Spleen (tissue), 13 donors: ENCODE measurements at regions of chr4 and their contacts with region 1.

Region 1: DNA sequence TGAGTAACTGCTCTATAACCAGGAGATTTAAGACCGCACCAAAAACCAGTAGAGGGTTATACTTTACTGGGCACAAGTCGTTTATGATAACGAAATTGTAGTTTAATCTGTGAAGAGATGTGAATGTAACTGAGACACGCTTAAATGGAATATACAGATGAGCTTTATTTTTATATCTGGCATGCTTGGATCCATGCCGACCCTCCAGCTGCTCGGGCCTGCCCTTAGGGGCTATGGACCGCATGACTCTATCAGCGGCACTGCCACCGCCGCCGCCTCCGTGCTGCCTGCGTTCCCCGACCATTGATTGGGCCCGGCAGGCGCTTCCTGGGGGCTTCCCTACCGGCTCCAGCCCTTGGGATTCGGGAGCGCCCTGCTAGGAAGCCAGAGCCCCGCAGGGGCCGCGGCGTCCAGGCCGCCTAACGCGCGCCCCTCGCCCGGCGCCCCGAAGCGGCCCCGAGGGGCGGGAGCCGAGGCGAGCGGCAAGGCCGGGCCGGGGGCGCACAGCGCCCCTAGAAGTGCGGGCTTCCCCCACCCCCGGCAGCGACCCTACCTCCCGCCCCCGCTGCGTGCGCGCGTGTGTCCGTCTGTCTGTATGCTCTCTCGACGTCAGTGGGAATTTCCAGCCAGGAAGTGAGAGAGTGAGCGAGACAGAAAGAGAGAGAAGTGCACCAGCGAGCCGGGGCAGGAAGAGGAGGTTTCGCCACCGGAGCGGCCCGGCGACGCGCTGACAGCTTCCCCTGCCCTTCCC is at the start of gene NFKB1:
- DNase-seq: peak; percentile 94
- H3K4me3 ChIP-seq: peak within 1 kb of the TSS; percentile 71 to 92 (median 88)
- H3K27ac ChIP-seq: peak within 1 kb of the TSS; percentile 86 to 99 (median 98)
- H3K4me1 ChIP-seq: peaks cover 18 to 48% (median 45%) of the 10 kb centered on the region in 6 donors
- H3K27me3 ChIP-seq: no peaks in the 10 kb centered on the region
- CTCF ChIP-seq: no peak
- POLR2A ChIP-seq: peak in 1 of 3 donors; percentile 39
- total RNA-seq, gene NFKB1: 52.6 to 94.4 (median 60.1) TPM

Region 2: GRCh38 chr4:102554482-102554881 is 53.6 kb after region 1 on chr4:
- intact Hi-C with region 1: loop called (anchors 10 kb)
- DNase-seq: no peak
- H3K4me3 ChIP-seq: no peak overlapping the region
- H3K27ac ChIP-seq: no peak overlapping the region
- H3K4me1 ChIP-seq: peaks cover 23 to 68% (median 43%) of the 10 kb centered on the region in 6 donors
- H3K27me3 ChIP-seq: no peaks in the 10 kb centered on the region
- CTCF ChIP-seq: no peak
- POLR2A ChIP-seq: no peak

Region 3: DNA sequence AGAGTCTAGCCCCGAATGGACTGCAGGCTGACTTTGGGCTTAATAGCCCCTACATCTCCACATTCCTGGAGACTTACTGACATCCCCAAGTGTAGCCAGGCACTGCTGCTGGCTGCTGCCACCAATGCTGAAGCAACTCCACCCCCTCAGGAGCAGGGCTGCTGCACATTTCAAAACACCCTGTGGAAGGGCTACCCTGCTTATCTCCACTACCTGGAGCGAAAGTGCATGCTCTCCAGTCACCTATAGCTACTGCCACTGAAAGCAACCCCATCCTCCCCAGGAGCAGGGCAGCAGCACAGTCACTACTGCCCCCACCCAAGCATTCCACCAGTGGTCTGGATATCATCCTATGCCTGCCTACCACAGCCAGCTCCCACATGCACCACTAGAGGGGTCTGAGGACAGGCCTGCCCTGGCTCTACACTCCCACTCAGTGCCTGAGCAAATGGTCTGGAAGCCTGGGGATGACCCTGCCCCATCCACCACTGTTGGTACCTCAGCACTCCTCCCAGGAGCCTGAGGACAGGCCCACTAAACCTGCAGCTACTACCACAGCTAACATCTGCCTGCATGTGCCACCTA is 204.6 kb after region 1 on chr4:
- intact Hi-C with region 1: no loop called
- DNase-seq: no peak
- H3K4me3 ChIP-seq: no peak overlapping the region
- H3K27ac ChIP-seq: no peak overlapping the region
- H3K4me1 ChIP-seq: no peaks in the 10 kb centered on the region
- H3K27me3 ChIP-seq: no peaks in the 10 kb centered on the region
- CTCF ChIP-seq: no peak
- POLR2A ChIP-seq: no peak